Activated B cell treated with CpG ODN at 0.5 μM for 24 hours (primary cell): ENCODE measurements at regions of chr12 and their contacts with region 1.

Region 1: DNA sequence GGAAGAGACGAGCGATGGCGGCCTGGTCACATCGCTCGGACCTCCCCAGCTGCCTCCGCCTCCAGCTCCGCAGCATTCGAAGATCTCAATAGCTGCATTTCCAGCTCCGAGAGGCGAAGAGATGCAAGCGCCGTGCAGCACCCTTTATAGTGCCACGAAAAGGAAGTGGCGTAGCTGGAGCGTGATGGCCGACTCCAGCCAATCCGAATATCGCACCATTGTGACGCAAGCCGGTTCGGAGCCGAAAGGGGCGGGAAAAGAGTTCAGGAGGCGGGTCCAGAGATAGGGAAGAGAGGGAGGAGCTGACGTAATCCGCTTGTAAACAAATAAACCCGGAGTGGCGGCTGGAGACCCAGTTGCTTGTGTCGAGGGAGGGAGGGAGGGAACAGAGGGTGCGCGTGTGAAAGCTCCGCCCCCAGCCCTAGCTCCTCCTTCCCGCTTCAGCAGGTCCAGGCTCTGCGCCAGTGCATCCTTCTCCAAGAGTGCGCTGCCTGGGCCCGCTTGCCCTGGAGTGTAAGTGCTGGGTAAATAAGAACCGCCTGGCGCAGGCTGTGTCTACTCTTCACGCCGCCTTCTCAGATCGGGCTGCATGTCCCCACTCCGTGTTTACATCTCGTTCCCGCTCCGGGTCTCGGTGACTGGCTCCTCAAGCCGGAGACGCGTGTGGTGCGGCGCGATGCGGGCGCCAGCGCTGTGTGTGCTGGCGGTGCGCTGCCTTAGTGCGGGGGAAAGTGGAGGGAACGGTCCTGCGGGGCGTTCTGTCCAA is at the start of gene BTG1:
- DNase-seq: peak; percentile 89
- ATAC-seq: peak; percentile 75
- H3K4me3 Mint-ChIP-seq: peak within 1 kb of the TSS; percentile 98
- H3K27ac Mint-ChIP-seq: peak within 1 kb of the TSS; percentile 99
- H3K4me1 Mint-ChIP-seq: peaks cover 39% of the 10 kb centered on the region
- H3K27me3 Mint-ChIP-seq: no peaks in the 10 kb centered on the region
- CTCF ChIP-seq: no peak
- total RNA-seq, gene BTG1: 423 and 429 TPM in 2 replicates

Region 2: DNA sequence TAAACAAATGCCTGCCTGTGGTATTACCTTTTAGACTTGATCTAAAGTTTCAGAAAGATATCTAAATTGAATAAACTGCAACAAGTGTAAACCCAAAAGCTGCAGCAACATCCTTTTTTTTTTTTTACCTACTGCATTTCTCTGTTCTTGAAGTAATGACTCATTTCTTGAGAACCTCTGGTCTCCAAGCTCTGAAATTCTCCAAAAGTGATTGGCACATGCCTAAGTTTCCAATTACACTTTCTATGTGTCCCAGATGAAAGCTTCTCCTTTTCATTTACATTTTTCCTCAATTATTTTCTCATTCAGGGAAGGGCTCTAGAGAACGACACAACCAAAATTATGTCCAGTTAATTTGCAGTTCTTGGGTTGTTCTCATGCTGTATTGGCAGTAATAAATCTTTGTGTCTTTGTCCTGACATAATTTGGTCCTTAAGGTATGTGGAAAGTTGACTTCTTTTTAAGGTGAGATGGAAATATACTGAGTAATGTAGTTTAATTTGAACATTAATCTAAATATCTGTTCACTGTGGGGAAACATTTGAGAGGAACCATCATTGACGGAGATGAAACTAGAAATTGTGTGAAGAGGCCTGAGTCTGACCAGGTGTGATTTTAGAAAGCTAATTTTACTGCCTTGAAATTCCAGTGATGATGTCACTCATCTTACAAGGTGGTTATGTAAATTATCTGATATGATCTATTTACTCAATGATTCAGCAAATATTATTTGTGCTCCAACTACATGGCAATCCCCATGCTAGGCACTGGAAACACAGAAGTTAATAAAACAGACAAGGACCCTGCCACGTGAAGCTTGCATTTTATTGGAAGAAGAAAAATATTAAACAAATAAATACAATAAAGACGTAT is 527.8 kb before region 1 on chr12:
- CTCF ChIA-PET with region 1: no interaction called
- POLR2A ChIA-PET with region 1: no interaction called
- intact Hi-C with region 1: no loop called
- DNase-seq: no peak
- ATAC-seq: no peak
- H3K4me3 Mint-ChIP-seq: no peak overlapping the region
- H3K27ac Mint-ChIP-seq: no peak overlapping the region
- H3K4me1 Mint-ChIP-seq: no peaks in the 10 kb centered on the region
- H3K27me3 Mint-ChIP-seq: peaks cover 16% of the 10 kb centered on the region
- CTCF ChIP-seq: no peak

Region 3: DNA sequence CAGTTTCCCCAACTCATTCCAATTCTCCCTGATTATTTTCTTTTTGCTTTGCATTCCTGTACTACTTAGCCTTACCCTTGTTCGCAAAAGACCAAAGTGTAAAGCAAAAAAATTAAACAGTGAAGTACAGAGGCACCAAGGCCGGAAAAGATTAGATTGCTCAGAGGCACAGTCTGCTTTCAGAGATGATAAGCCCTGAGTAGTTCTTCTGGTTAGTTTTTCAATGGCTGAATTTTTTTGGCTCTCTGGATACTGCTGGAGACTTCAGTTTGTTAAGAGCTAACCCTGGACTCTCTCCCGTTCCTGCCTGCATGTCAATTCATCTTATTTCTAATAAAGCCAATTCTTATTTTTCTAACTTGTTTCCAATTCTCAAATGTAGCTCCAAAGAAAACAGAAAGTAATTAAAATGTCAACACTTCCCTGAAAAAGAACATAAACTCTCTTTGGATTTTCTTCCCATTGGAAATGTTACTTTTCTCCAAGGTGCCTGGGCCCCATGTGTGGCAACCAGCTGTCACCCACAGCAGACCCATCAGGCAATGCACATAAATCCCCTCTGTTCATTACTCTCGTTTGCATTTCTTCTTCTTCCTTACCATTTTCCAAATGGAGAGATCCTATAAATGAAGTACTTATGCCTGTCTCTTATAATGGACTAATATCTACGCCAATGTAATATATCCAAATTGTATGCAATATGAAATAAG is 143.1 kb before region 1 on chr12:
- CTCF ChIA-PET with region 1: no interaction called
- POLR2A ChIA-PET with region 1: interaction called, 4 read pairs
- intact Hi-C with region 1: loop called (anchors 5 kb)
- DNase-seq: no peak
- ATAC-seq: no peak
- H3K4me3 Mint-ChIP-seq: no peak overlapping the region
- H3K27ac Mint-ChIP-seq: no peak overlapping the region
- H3K4me1 Mint-ChIP-seq: peaks cover 13% of the 10 kb centered on the region
- H3K27me3 Mint-ChIP-seq: no peaks in the 10 kb centered on the region
- CTCF ChIP-seq: no peak

Region 4: GRCh38 chr12:92185052-92185451 is 39.1 kb after region 1 on chr12:
- CTCF ChIA-PET with region 1: no interaction called
- POLR2A ChIA-PET with region 1: interaction called, 607 read pairs
- intact Hi-C with region 1: loop called (anchors 5 kb)
- DNase-seq: no peak
- ATAC-seq: peak; percentile 54
- H3K4me3 Mint-ChIP-seq: peak overlapping the region; percentile 76
- H3K27ac Mint-ChIP-seq: peak overlapping the region; percentile 95
- H3K4me1 Mint-ChIP-seq: peaks cover 57% of the 10 kb centered on the region
- H3K27me3 Mint-ChIP-seq: no peaks in the 10 kb centered on the region
- CTCF ChIP-seq: no peak

Region 5: GRCh38 chr12:92341065-92341668 is 195.3 kb after region 1 on chr12:
- CTCF ChIA-PET with region 1: interaction called, 4 read pairs
- POLR2A ChIA-PET with region 1: interaction called, 20 read pairs
- intact Hi-C with region 1: no loop called
- DNase-seq: no peak
- ATAC-seq: peak; percentile 84
- H3K4me3 Mint-ChIP-seq: peak overlapping the region; percentile 79
- H3K27ac Mint-ChIP-seq: peak overlapping the region; percentile 91
- H3K4me1 Mint-ChIP-seq: peaks cover 43% of the 10 kb centered on the region
- H3K27me3 Mint-ChIP-seq: no peaks in the 10 kb centered on the region
- CTCF ChIP-seq: no peak

Region 6: GRCh38 chr12:92466391-92467305 is 320.7 kb after region 1 on chr12:
- CTCF ChIA-PET with region 1: interaction called, 4 read pairs
- POLR2A ChIA-PET with region 1: interaction called, 126 read pairs
- intact Hi-C with region 1: loop called (anchors 1 kb)
- DNase-seq: peak; percentile 51
- ATAC-seq: peak; percentile 74
- H3K4me3 Mint-ChIP-seq: peak overlapping the region; percentile 93
- H3K27ac Mint-ChIP-seq: peak overlapping the region; percentile 99
- H3K4me1 Mint-ChIP-seq: peaks cover 94% of the 10 kb centered on the region
- H3K27me3 Mint-ChIP-seq: no peaks in the 10 kb centered on the region
- CTCF ChIP-seq: no peak

Region 7: DNA sequence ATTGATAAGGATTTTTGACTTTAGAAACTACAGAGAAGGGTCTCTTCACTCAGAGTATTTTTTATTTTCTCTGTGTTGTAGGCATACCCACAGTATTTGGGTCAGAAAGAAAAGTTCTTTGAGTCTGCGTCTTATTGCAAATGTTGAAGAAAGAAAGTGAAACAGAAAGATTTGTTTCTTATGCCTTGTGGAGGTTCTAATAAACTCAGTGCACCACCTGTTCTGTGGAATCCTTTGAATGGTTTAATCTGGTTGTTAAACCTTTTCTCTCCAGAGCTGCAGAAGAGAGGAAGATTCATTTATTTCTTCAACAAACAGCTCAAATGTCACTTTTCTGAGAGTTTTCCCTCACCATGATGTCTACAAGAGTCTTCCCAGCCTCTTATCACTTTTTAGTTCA is 410.2 kb after region 1 on chr12:
- CTCF ChIA-PET with region 1: no interaction called
- POLR2A ChIA-PET with region 1: interaction called, 28 read pairs
- intact Hi-C with region 1: no loop called
- DNase-seq: no peak
- ATAC-seq: peak; percentile 33
- H3K4me3 Mint-ChIP-seq: peak overlapping the region; percentile 69
- H3K27ac Mint-ChIP-seq: peak overlapping the region; percentile 90
- H3K4me1 Mint-ChIP-seq: peaks cover 64% of the 10 kb centered on the region
- H3K27me3 Mint-ChIP-seq: no peaks in the 10 kb centered on the region
- CTCF ChIP-seq: no peak

Region 8: DNA sequence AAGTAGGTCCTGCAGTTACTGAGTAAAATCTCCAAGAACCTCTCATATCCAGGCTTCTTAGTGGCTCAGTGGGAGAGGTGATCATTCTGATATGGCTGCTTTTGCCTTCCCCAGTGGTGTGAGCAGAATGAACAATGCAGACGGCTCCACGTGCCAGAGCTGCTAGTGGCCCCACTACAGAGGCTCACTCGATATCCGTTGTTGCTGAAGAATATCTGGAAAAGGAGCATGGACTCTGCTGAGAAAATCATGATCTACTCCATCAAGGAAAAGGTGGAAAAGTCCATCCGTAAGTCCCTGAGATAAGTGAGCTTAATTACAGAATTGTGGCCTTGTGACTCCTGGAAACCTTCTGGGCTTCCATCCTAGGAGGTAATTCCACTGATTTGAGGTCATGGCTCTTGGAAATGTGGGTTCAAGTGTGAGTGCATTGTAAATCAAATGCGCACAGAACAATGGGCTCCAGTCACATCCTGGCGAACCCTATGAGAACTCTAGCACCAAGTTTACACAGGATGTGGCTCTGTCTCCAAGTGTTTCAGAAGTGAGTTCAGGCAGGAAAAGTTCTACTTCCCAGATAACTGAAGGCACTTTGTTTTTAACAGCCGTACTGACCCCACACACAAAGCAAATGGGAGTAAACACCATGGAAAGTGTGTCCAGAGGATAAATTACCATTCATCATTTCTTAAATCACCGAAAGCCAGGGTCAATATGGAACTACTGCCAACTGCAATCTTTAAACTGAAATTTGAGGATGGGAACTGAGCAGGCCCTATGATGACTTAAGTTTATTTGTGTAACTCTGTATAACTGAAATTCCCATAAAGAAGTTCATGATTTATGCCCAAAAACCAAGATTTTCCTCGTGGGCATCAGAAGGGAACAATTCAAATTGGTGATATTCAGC is 608.3 kb after region 1 on chr12:
- CTCF ChIA-PET with region 1: no interaction called
- POLR2A ChIA-PET with region 1: no interaction called
- intact Hi-C with region 1: no loop called
- DNase-seq: no peak
- ATAC-seq: no peak
- H3K4me3 Mint-ChIP-seq: no peak overlapping the region
- H3K27ac Mint-ChIP-seq: no peak overlapping the region
- H3K4me1 Mint-ChIP-seq: peaks cover 3% of the 10 kb centered on the region
- H3K27me3 Mint-ChIP-seq: no peaks in the 10 kb centered on the region
- CTCF ChIP-seq: no peak

Region 9: GRCh38 chr12:93441617-93442410 is 1295.9 kb after region 1 on chr12 and contains the start of gene UBE2N:
- CTCF ChIA-PET with region 1: no interaction called
- POLR2A ChIA-PET with region 1: no interaction called
- intact Hi-C with region 1: loop called (anchors 10 kb)
- DNase-seq: peak; percentile 99
- ATAC-seq: peak; percentile 84
- H3K4me3 Mint-ChIP-seq: peak within 1 kb of the TSS; percentile 96
- H3K27ac Mint-ChIP-seq: peak within 1 kb of the TSS; percentile 96
- H3K4me1 Mint-ChIP-seq: peaks cover 56% of the 10 kb centered on the region
- H3K27me3 Mint-ChIP-seq: no peaks in the 10 kb centered on the region
- CTCF ChIP-seq: no peak
- total RNA-seq, gene UBE2N: 152 and 163 TPM in 2 replicates

Region 10: DNA sequence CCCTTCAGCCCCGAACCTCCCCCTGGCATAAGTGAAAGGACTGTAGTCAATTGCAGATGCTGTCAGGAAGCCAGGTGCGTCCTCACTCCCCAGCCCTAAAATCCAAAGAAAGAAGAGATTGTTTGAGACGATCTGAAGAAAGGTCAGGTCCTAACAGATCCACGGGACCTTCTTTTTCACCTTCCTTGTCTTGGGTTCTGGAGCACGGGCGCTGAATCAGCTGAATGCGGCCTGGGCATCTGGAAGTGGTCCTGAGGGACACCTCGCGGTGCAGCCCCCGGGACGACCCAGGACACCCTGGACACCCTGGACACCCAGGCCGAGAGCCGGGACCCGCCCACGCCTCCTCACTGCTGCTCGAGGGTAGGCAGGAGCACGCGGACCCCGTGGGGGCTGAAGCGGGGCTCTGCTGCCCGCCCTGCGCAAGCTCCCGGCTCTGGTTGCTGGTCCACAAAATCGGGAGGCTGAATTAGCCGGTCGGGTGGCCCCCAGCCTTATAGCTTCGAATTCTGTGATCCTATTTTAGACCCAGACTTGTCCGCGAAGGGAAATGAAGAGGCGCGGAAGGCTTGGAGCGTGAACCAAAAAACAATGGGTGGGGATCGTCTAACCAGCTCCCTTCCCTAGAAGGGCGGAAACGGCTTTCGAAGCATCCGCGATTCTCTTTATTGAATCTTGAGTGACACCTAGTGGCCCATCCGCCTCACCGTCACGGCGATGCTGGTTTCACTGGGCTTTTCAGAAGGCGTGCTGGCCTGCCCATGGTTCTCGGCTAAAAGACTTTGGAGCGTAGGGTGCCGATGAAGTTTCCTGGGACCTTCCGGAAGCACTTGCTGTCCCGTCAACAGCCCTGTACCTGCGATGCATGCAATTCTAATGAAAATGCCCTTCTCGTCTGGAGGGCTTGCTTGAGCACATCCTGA is 1956.1 kb after region 1 on chr12:
- CTCF ChIA-PET with region 1: no interaction called
- POLR2A ChIA-PET with region 1: no interaction called
- intact Hi-C with region 1: no loop called
- DNase-seq: peak; percentile 64
- ATAC-seq: peak; percentile 87
- H3K4me3 Mint-ChIP-seq: peak overlapping the region; percentile 83
- H3K27ac Mint-ChIP-seq: no peak overlapping the region
- H3K4me1 Mint-ChIP-seq: peaks cover 6% of the 10 kb centered on the region
- H3K27me3 Mint-ChIP-seq: peaks cover 54% of the 10 kb centered on the region
- CTCF ChIP-seq: peak; percentile 34